ENCODE measurements at regions of chr4 and their contacts with region 1.

Region 1: DNA sequence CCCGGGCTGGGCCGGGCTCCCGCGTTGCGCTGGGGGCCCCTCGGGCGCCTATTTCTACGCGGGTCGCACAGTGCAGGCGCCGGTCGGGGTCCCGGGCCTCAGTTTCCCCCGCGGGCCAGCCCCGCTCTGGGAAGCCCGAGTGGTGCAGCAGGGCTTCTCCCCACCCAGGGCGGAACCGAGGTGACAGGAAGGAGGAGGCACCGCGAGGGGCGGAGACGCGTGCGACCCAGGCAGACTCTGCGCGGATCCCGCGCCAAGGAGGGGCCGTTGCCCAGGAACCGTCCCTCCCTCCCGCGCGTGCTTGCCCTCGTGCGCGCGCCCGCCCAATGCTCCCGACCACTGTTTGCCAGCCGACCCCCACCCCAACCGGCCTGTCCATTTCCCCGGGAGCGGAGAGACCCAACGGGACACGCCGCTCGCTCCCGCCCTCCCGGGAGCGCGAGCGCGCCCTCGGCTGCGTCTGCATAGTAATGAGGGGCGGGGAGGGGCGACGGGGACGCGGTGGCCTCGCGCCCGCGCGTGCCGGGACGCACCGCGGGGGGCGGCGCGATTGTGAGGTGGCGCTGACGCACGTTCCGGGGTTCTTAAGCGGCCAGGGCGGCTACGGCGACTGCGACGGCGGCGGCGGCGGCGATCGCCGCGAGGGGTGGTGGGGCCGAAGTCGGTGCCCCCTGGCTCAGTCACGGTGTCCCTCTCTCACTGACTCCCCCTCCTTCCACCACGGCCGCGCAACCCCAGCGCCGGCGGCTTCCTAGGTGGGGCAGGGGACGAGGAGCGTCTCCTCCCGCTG is at the start of gene CPEB2:
- DNase-seq: peak; percentile 92
- ATAC-seq: peak; percentile 69
- H3K4me3 Mint-ChIP-seq: peak within 1 kb of the TSS; percentile 93
- H3K27ac Mint-ChIP-seq: peak within 1 kb of the TSS; percentile 96
- H3K4me1 Mint-ChIP-seq: peaks cover 23% of the 10 kb centered on the region
- H3K27me3 Mint-ChIP-seq: no peaks in the 10 kb centered on the region
- CTCF ChIP-seq: no peak
- total RNA-seq, gene CPEB2: 6.9 and 7.2 TPM in 2 replicates

Region 2: DNA sequence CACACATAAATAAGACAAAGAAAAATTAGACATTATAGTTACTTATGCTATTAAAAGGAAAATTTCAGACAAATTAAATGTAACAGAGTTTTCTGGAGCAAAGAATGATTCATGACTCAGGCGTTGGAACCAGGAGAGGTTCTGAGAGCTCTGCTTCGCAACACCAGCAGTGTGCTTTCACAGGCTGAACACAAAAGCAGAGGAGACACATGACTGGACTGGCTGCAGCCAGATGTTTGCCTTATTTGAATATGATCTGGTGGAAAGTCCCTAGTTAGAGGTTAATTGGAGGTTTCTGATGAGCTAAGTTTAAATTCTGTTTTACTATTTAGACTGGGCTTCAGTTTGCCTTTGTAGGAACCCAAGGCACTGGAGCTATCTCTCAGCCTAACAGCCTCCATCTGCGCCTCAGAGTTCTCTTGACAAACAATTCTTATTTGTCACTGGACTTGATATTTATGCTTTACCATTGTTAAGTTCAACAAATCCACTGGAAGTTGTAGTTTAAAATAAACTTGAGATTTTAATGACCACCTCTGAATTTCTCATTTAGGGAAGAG is 1390.7 kb before region 1 on chr4:
- CTCF ChIA-PET with region 1: no interaction called
- POLR2A ChIA-PET with region 1: interaction called, 4 read pairs
- intact Hi-C with region 1: loop called (anchors 5 kb)
- DNase-seq: no peak
- ATAC-seq: peak; percentile 90
- H3K4me3 Mint-ChIP-seq: peak overlapping the region; percentile 62
- H3K27ac Mint-ChIP-seq: peak overlapping the region; percentile 88
- H3K4me1 Mint-ChIP-seq: peaks cover 57% of the 10 kb centered on the region
- H3K27me3 Mint-ChIP-seq: no peaks in the 10 kb centered on the region
- CTCF ChIP-seq: no peak

Region 3: DNA sequence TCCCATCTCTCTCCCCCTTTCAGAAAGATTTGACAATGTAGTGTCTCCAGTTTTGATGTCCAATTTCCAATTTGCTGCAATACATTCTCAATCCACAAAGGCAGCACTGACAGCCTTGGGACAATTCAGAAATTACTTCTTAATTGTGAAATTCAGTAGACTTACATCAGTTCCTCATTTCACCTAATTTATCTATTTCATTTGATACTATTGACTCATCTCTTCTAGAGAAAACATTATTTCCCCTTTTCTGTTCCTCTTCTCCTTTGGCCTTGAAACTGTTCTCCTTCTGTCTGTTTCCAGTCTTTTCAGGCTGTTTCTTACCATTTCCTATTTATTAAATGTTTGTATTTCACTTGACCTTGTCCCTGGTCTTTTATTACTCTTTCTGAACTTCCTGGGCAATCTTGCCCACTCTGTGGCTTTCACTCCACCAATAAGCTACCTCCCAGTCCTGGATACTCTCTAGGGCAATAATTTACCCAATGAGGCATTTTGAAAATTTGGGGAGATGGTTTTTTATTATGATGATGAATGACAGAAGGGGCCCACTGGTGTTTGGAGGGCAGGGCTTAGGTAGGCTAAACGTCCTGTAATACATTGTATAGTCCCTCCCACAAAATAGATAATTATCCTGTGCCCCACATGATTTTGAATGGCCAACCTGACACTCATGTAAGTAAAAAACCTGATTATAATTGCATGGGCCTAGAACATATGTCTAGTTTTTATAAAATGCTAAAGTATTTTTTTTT is 876.5 kb before region 1 on chr4:
- CTCF ChIA-PET with region 1: no interaction called
- POLR2A ChIA-PET with region 1: no interaction called
- intact Hi-C with region 1: loop called (anchors 5 kb)
- DNase-seq: no peak
- ATAC-seq: peak; percentile 90
- H3K4me3 Mint-ChIP-seq: peak overlapping the region; percentile 59
- H3K27ac Mint-ChIP-seq: peak overlapping the region; percentile 84
- H3K4me1 Mint-ChIP-seq: peaks cover 27% of the 10 kb centered on the region
- H3K27me3 Mint-ChIP-seq: no peaks in the 10 kb centered on the region
- CTCF ChIP-seq: no peak

Region 4: DNA sequence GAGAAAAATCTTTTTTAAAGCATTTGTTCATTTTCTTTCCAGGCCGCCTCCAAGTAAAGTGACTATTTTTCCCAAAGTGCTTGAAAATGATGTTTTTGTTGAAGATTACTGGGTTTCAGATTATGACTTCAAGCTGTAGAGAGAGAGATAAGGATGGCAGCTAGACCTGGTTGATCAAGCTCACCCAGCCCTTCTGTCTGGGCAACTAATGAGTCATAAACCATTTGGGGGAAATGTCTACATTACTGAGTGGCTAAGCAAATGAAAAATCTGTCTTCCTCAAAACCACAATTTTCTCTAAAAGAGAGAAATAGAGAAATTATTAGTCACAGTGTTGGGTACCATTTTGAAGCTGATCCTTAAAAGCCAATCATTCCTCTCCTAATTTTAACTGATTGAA is 355.2 kb before region 1 on chr4:
- CTCF ChIA-PET with region 1: no interaction called
- POLR2A ChIA-PET with region 1: no interaction called
- intact Hi-C with region 1: no loop called
- DNase-seq: no peak
- ATAC-seq: no peak
- H3K4me3 Mint-ChIP-seq: no peak overlapping the region
- H3K27ac Mint-ChIP-seq: no peak overlapping the region
- H3K4me1 Mint-ChIP-seq: no peaks in the 10 kb centered on the region
- H3K27me3 Mint-ChIP-seq: no peaks in the 10 kb centered on the region
- CTCF ChIP-seq: no peak

Region 5: GRCh38 chr4:14856076-14856933 is 145.8 kb before region 1 on chr4:
- CTCF ChIA-PET with region 1: no interaction called
- POLR2A ChIA-PET with region 1: interaction called, 3 read pairs
- intact Hi-C with region 1: loop called (anchors 5 kb)
- DNase-seq: no peak
- ATAC-seq: peak; percentile 85
- H3K4me3 Mint-ChIP-seq: no peak overlapping the region
- H3K27ac Mint-ChIP-seq: peak overlapping the region; percentile 16
- H3K4me1 Mint-ChIP-seq: peaks cover 4% of the 10 kb centered on the region
- H3K27me3 Mint-ChIP-seq: no peaks in the 10 kb centered on the region
- CTCF ChIP-seq: no peak

Region 6: DNA sequence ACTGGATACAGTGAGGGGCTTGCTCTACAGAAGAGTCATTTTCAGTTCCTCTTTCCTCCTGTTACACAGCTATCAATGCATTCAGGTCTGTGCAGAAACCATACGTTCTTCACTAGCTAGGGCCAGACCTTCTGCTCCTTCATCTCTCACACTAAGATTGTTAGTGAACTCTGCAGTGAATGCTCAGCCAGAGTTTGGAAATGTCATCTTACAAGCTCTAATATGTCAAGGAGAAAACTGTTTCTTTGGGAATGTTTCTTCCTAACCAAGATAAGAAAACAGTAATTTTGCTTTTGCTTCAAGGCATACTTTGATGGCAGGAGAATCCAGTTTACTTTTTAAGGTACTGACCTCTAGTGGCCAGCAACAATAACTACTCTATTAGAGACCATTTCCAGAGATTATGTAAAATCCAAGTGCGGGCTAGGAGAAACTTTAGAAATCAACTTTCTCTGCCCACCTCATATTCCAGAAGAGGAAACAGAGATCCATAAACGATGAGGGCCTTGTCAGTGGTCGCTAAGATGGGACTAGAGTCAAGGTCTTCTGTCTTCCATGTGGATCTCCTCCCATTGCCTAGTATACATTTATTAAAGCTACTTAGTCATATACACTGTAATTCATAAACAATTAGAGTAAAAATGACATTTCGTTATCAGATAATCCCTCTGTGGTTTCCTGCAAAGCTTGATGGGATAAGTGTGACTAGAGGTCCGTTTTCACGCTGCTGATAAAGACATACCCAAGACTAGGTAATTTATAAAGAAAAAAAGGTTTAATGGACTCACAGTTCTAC is 455.5 kb after region 1 on chr4:
- CTCF ChIA-PET with region 1: interaction called, 3 read pairs
- POLR2A ChIA-PET with region 1: interaction called, 6 read pairs
- intact Hi-C with region 1: loop called (anchors 2 kb)
- DNase-seq: no peak
- ATAC-seq: peak; percentile 99
- H3K4me3 Mint-ChIP-seq: peak overlapping the region; percentile 21
- H3K27ac Mint-ChIP-seq: peak overlapping the region; percentile 72
- H3K4me1 Mint-ChIP-seq: peaks cover 17% of the 10 kb centered on the region
- H3K27me3 Mint-ChIP-seq: peaks cover 2% of the 10 kb centered on the region
- CTCF ChIP-seq: no peak

Region 7: GRCh38 chr4:15778289-15779241 is 776.5 kb after region 1 on chr4 and contains the start of gene CD38:
- CTCF ChIA-PET with region 1: no interaction called
- POLR2A ChIA-PET with region 1: no interaction called
- intact Hi-C with region 1: loop called (anchors 10 kb)
- DNase-seq: peak; percentile 42
- ATAC-seq: peak; percentile 74
- H3K4me3 Mint-ChIP-seq: peak within 1 kb of the TSS; percentile 88
- H3K27ac Mint-ChIP-seq: peak within 1 kb of the TSS; percentile 38
- H3K4me1 Mint-ChIP-seq: peaks cover 62% of the 10 kb centered on the region
- H3K27me3 Mint-ChIP-seq: no peaks in the 10 kb centered on the region
- CTCF ChIP-seq: no peak
- total RNA-seq, gene CD38: 5.0 and 5.8 TPM in 2 replicates

Measured in activated B cell treated with CpG ODN at 0.5 μM for 24 hours (primary cell).